ENCODE measurements at regions of chr2 and their contacts with region 1.

Region 1: DNA sequence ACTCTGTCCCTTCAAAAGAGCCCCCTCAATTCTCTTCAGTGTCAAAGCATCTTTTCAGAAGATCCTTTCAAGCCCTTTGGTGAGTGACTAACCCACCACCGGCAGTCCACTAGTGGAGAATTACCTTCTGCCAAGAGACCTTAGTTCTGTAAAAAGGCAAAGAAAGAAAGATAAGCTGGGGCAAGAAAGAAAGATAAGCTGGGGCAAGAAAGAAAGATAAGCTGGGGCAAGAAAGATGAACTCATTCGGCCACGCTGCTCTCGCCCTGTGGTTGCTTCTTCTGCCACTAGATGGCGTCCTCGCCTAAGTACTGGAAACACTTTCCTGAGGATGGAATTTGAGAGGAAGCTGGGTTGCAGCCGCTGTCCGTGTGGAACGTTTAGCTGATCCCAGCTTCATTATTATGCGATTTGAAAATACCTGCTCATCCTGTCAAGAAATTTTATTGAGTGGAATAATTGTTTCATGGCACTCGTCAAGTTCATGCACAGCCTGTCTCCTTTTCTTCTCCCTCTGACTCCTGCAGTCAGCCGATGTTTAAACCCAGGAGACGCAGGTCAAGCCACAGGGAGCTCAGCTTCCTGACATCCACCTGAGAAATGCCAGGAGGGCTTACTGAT is 17.3 kb upstream of the ANXA4 start:
- DNase-seq: peak; percentile 91
- H3K4me3 Mint-ChIP-seq: peak overlapping the region; percentile 48
- H3K27ac Mint-ChIP-seq: no peak overlapping the region
- H3K4me1 Mint-ChIP-seq: peaks cover 4% of the 10 kb centered on the region
- H3K27me3 Mint-ChIP-seq: no peaks in the 10 kb centered on the region

Region 2: GRCh38 chr2:69565431-69565839 is 159.2 kb before region 1 on chr2:
- CTCF ChIA-PET with region 1: interaction called, 33 read pairs
- POLR2A ChIA-PET with region 1: no interaction called
- intact Hi-C with region 1: no loop called
- DNase-seq: peak; percentile 81
- H3K4me3 Mint-ChIP-seq: no peak overlapping the region
- H3K27ac Mint-ChIP-seq: no peak overlapping the region
- H3K4me1 Mint-ChIP-seq: peaks cover 88% of the 10 kb centered on the region
- H3K27me3 Mint-ChIP-seq: no peaks in the 10 kb centered on the region

Region 3: GRCh38 chr2:69667805-69668382 is 56.8 kb before region 1 on chr2:
- CTCF ChIA-PET with region 1: no interaction called
- POLR2A ChIA-PET with region 1: no interaction called
- intact Hi-C with region 1: no loop called
- DNase-seq: no peak
- H3K4me3 Mint-ChIP-seq: no peak overlapping the region
- H3K27ac Mint-ChIP-seq: no peak overlapping the region
- H3K4me1 Mint-ChIP-seq: peaks cover 16% of the 10 kb centered on the region
- H3K27me3 Mint-ChIP-seq: no peaks in the 10 kb centered on the region

Region 4: DNA sequence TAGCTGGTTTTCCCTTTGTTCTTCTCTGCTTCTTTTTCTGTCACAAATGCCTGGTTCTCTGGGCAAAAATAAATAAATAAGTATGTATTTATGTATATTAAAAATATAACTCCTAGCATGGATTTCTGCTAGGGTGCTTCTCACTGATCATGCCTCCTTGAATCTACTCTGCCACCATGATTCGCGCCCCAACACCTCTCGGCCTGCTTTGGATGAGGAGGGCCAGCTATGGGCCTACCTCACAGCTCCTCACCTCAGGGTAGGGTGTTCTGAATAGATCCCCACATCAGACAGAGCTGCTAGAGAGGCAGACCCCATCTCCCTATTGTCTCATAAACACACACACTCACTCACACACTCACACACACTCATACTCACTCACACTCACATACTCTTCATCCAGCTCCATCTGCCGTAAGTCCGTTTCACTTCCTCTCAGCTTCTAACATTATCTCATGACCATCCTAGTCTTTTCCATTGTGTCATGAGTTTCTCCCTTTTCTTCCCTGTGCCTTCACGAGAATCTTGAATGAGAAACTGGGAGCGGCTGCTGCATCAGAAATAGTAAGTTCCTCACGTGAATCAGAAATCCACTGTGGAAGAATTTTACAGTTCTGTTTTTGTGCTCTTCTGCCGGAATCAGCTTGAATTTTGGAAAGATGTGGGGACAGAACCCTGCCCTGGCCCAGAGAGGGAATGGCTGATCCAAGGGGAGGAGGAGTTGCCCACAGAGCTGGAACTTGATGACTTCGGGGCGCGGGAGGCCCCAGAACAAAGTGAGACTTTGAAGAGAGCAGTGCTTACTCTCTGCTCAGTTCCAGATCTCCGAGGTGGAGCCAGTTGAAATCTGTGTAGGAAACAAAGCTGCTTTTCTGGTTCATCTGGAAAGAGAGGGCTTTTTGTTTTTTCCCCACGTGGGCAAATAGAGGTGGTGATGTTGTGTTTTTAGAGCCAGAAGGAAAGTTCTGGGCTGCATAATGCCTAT is 38.2 kb after region 1 on chr2:
- CTCF ChIA-PET with region 1: interaction called, 13 read pairs
- POLR2A ChIA-PET with region 1: no interaction called
- intact Hi-C with region 1: no loop called
- DNase-seq: no peak
- H3K4me3 Mint-ChIP-seq: no peak overlapping the region
- H3K27ac Mint-ChIP-seq: no peak overlapping the region
- H3K4me1 Mint-ChIP-seq: peaks cover 23% of the 10 kb centered on the region
- H3K27me3 Mint-ChIP-seq: no peaks in the 10 kb centered on the region

Region 5: DNA sequence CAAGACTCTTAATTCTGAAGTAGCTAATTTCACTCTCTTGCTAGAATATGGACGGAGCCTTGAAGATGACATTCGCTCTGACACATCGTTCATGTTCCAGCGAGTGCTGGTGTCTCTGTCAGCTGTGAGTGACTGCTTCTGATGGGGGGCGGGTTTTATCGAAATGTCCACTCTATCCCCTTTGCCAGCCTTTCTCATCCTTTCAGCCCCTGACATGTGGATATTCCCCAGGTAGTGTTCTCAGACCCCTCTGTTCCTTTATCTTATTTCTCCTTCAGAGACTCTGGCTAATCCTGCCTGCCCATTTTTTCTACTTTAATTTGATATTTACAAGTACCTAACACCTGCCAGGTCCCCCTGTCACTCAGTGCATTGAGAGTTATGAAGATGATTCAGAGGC is 85.9 kb after region 1 on chr2:
- CTCF ChIA-PET with region 1: interaction called, 387 read pairs
- POLR2A ChIA-PET with region 1: no interaction called
- intact Hi-C with region 1: no loop called
- DNase-seq: no peak
- H3K4me3 Mint-ChIP-seq: no peak overlapping the region
- H3K27ac Mint-ChIP-seq: no peak overlapping the region
- H3K4me1 Mint-ChIP-seq: no peaks in the 10 kb centered on the region
- H3K27me3 Mint-ChIP-seq: no peaks in the 10 kb centered on the region

Region 6: GRCh38 chr2:69893684-69894551 is 169.3 kb after region 1 on chr2 and contains the start of gene SNRNP27:
- CTCF ChIA-PET with region 1: interaction called, 26 read pairs
- POLR2A ChIA-PET with region 1: interaction called, 3 read pairs
- intact Hi-C with region 1: no loop called
- DNase-seq: peak; percentile 87
- H3K4me3 Mint-ChIP-seq: peak within 1 kb of the TSS; percentile 99
- H3K27ac Mint-ChIP-seq: peak within 1 kb of the TSS; percentile 96
- H3K4me1 Mint-ChIP-seq: peaks cover 46% of the 10 kb centered on the region
- H3K27me3 Mint-ChIP-seq: no peaks in the 10 kb centered on the region
- total RNA-seq, gene SNRNP27: 67.5 to 70.4 TPM

Region 7: GRCh38 chr2:70142590-70143313 is 418.1 kb after region 1 on chr2:
- CTCF ChIA-PET with region 1: interaction called, 3 read pairs
- POLR2A ChIA-PET with region 1: no interaction called
- intact Hi-C with region 1: loop called (anchors 2 kb)
- DNase-seq: peak; percentile 100
- H3K4me3 Mint-ChIP-seq: peak overlapping the region; percentile 89
- H3K27ac Mint-ChIP-seq: peak overlapping the region; percentile 96
- H3K4me1 Mint-ChIP-seq: peaks cover 62% of the 10 kb centered on the region
- H3K27me3 Mint-ChIP-seq: no peaks in the 10 kb centered on the region

Measured in activated CD4-positive, alpha-beta memory T cell treated with anti-CD3 and anti-CD28 coated beads for 36 hours (primary cell).